PC-9 (cell line): ENCODE measurements at regions of chr15 and their contacts with region 1.

Region 1: GRCh38 chr15:75339531-75340240 is 3.8 kb downstream of the COMMD4 start:
- DNase-seq: no peak
- H3K4me3 ChIP-seq: no peak overlapping the region
- H3K27ac ChIP-seq: no peak overlapping the region
- H3K4me1 ChIP-seq: peaks cover 13% of the 10 kb centered on the region; the same call in 1 of the 2 replicates
- H3K27me3 ChIP-seq: no peaks in the 10 kb centered on the region
- CTCF ChIP-seq: no peak

Region 2: DNA sequence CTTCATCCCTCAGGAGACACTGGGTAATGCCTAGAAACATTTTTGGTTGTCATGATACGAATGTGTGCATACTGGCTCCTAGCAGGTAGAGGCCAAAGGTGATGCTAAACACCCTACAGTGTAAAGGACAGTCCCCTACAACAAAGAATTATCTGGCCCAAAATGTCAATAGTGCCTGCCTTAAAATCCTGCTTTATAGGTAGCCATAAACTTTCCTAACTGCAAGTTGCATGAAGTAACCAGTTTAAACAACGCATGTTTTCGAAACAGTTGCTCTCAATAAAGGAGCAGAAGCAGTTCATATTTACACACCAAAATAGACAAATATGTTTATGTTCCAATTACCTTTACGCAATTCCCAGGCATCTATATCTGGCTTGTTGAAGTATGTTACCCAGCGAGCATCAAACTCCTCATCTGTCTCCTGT is 410.9 kb before region 1 on chr15:
- CTCF ChIA-PET with region 1: no interaction called
- POLR2A ChIA-PET with region 1: interaction called, 34 read pairs
- intact Hi-C with region 1: no loop called
- DNase-seq: no peak
- H3K4me3 ChIP-seq: no peak overlapping the region
- H3K27ac ChIP-seq: no peak overlapping the region
- H3K4me1 ChIP-seq: no peaks in the 10 kb centered on the region
- H3K27me3 ChIP-seq: no peaks in the 10 kb centered on the region
- CTCF ChIP-seq: no peak

Region 3: DNA sequence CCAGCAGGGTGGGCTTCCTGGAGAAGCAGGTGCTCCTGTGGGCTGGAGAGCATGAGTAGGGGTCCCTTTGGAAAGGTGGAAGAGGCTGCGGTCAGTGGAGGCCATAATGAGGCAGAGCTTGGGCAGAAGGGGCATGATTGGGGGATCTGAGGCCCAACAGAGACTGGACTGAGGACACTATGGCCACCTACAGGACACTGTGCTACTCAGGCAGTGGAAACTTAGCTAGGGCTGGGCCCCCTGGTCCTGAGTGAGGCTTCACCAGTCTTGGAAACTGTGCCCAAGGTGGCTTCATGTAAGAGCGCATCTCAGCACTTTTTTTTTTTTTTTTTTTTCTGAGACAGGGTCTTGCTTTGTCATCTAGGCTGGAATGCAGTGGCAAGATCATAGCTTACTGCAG is 10.1 kb before region 1 on chr15:
- CTCF ChIA-PET with region 1: no interaction called
- POLR2A ChIA-PET with region 1: interaction called, 19 read pairs
- intact Hi-C with region 1: no loop called
- DNase-seq: no peak
- H3K4me3 ChIP-seq: no peak overlapping the region
- H3K27ac ChIP-seq: no peak overlapping the region
- H3K4me1 ChIP-seq: 0 out of 2 replicates have a peak, but pooled peaks cover under 1% of the 10 kb centered on the region
- H3K27me3 ChIP-seq: no peaks in the 10 kb centered on the region
- CTCF ChIP-seq: no peak